GM10248 (cell line): ENCODE measurements at regions of chr22 and their contacts with region 1.

Region 1: DNA sequence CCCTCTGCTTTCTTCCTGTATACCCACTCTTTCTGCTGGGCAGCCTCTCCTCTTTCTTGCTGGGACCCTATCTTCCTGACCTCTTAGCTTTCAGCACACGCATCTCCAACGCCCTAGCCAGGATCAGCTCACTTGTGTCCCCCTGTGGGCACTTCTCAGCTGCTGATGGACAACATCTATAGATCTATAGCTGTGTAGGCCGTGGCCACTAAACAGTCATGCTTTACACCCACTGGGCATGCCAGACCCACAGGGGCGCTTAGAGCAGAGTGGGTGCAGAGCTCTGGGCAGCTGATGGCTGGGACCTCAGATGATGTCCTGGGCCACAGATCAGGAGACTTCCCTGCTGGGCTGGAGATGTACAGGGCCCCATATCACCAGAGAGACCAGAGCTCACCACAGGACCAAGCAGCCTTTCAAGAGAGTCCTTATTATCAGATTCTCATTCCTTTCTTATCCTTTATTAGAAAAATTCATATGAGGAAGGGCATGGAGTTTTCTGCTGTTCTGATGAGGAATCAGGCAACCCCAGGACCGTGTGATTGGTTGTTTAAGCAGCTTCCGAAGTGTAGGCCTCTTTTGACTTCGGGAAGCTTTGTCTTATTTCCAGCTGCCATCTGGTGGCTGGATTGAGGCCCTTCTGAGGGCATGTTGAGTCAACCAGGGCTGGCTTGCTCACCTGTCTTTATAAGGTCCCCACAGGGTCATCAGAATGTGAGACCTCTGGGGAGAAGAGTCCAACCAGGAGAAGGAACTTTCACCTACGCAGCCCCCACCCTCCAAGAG is 60.5 kb downstream of the OSBP2 start:
- DNase-seq: peak; percentile 85
- CTCF ChIP-seq: peak; percentile 83

Region 2: GRCh38 chr22:30444632-30445437 is 310.3 kb before region 1 on chr22:
- CTCF ChIA-PET with region 1: interaction called, 10 read pairs
- POLR2A ChIA-PET with region 1: no interaction called
- DNase-seq: peak; percentile 86
- CTCF ChIP-seq: peak; percentile 71

Region 3: DNA sequence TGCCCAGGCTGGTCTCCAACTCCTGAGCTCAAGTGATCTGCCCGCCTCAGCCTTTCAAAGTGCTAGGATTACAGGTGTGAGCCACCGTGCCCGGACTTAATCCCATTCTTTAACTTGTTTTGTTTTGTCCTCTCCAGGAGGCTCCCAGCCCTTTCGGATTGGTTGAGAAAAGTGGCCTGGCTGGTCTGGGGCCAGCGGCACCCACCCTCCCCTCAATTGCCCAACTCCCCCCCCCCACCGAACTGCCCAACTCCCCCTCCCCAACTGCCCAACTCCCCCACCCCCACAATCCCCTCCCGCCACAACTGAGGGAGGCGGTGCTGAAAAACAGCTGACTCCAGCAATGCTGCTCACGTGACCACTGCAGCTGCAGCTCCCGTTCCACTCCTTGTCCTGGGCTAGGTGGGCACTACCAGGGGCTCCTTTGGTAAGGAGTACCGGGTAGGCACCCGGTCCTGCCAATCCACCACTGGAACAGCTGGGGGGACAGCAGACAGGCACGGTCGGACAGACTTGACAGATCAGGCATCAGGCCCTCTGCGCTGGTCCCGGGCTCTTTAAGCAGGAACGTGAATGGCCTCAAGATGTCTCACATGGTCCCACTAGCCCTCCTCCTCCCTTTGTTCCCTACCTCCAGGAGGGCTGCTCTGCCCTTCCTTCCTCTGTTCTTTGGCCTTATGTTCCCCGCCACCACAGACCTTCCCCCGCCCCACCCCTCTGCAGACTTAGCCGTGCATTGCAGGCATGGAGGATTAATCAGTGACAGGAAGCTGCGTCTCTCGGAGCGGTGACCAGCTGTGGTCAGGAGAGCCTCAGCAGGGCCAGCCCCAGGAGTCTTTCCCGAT is 148.5 kb before region 1 on chr22 and contains the start of gene TCN2:
- CTCF ChIA-PET with region 1: interaction called, 14 read pairs
- POLR2A ChIA-PET with region 1: no interaction called
- DNase-seq: peak; percentile 73
- CTCF ChIP-seq: no peak

Region 4: DNA sequence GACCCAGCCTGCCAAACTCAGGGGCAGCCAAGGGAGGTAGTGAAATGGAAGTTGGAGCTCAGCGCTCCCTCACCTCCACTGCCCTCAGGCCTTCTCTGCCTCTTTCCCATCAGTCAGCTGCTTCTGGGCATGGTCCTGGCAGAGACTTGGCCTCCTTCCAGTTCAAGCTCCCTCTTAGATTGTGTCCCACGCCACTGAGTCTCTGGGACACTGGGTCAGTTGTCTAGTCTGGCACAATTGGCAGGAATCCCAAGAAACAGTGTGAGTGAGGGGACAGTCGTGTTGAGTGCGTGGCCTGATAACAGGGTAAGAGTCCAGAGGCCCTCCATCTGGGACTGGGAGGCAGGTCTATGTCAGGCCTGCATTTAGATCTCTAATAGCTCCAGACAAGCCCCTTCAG is 126.7 kb before region 1 on chr22:
- CTCF ChIA-PET with region 1: interaction called, 208 read pairs
- POLR2A ChIA-PET with region 1: no interaction called
- DNase-seq: no peak
- CTCF ChIP-seq: no peak

Region 5: DNA sequence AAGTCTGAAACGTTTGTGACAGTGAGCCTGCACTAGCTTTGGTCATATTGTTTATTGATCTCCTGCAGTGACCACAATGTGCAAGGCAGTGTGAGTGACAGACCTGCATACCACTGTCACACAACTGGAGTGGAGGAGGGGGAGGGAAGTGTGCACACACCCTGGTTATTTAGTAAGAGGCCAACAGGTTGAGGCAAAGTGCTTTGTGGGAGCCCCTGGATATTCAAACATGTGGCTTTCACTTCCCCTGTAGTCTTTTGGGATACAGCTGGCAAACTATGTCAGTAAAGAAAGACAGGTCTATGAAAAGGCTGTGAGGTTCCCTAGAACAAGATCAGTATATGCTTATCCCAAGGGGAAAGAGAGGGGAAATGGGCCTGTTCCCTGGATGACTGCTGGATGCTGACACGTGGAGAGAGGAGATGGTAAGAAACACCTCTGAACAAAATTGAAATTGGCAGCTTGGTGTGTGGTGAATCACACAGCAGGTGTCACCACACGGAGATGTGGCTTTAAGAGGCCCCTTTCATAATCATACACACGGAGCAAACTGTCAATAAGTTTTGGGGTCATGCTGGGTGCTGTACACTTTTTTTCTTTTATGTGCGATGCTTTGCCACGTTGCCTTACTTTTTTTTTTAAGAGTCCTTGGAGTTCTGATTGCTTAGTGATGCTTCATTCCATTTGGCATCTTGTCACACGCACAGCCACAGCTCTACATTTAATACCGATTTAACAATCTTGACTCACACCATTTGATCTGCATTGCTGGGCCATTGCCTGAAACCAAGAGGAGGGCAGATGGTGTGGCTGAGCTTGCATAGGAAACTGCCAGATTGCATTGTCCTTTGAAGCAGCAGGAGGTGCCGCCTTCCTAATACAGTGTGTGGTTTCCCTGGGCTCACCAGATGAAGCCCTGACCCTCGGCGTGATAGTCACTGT is 49.2 kb before region 1 on chr22:
- CTCF ChIA-PET with region 1: interaction called, 11 read pairs
- POLR2A ChIA-PET with region 1: no interaction called
- DNase-seq: peak; percentile 54
- CTCF ChIP-seq: no peak

Region 6: GRCh38 chr22:30742291-30743256 is 12.6 kb before region 1 on chr22:
- CTCF ChIA-PET with region 1: interaction called, 57 read pairs
- POLR2A ChIA-PET with region 1: no interaction called
- DNase-seq: no peak
- CTCF ChIP-seq: no peak

Region 7: GRCh38 chr22:30777587-30777986 is 22.4 kb after region 1 on chr22:
- CTCF ChIA-PET with region 1: no interaction called
- POLR2A ChIA-PET with region 1: no interaction called
- DNase-seq: no peak
- CTCF ChIP-seq: no peak

Region 8: GRCh38 chr22:30866811-30867271 is 111.7 kb after region 1 on chr22:
- CTCF ChIA-PET with region 1: no interaction called
- POLR2A ChIA-PET with region 1: no interaction called
- DNase-seq: no peak
- CTCF ChIP-seq: no peak